ENCODE measurements at regions of chr2 and their contacts with region 1.

Region 1: DNA sequence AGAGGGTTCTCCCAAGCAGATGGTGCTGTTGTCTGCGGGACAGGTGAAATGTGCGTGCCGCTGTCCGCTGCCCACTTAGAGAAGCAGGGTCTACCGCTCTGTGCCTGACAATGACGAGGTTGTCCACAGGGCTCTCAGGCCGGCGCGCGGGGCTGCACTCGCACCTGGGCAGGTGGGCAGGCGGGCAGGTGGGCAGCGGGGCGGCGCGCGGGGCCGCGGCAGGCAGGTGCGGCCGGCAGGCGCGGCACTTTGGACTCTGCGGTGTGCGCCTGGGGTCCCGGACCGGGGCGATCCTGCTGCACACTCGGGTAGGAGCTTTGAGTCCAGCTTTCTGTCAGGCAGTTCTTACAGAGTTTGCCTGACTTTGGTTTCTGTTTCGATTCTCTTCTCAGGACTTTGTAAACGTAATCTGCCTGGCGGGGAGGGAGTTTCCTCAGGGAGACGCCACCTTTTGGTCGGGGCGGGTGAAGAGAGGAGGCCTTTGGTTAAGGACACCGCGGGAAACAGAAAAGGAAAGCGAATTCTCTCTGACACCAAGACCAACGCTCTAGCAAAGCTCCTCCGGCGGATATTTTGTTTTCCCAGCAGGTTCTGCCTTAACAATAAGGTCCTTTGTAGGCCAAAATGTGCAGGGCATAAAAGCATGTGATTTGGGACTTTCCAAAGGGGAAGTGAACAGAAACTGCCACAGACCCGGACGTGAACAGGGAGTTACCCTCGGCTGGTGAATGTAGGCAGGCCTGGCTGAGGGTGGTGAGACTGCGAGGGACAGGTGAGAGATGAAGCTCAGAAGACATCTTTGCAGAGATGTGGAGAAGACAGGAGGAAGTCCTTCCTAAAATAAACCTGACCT is at the start of gene IFIH1:
- DNase-seq: peak; percentile 93 to 98 (median 97)
- H3K4me3 ChIP-seq: peak within 1 kb of the TSS; percentile 87 to 100 (median 96)
- H3K27ac ChIP-seq: peak within 1 kb of the TSS; percentile 98 to 99
- H3K4me1 ChIP-seq: peaks cover 13 to 51% (median 32%) of the 10 kb centered on the region in 4 experiments
- H3K27me3 ChIP-seq: no peaks in the 10 kb centered on the region

Region 2: GRCh38 chr2:162058973-162059668 is 259.4 kb before region 1 on chr2:
- CTCF ChIA-PET with region 1: no interaction called
- POLR2A ChIA-PET with region 1: no interaction called
- DNase-seq: no peak
- H3K4me3 ChIP-seq: no peak overlapping the region
- H3K27ac ChIP-seq: no peak overlapping the region
- H3K4me1 ChIP-seq: no peaks in the 10 kb centered on the region
- H3K27me3 ChIP-seq: no peaks in the 10 kb centered on the region

Region 3: DNA sequence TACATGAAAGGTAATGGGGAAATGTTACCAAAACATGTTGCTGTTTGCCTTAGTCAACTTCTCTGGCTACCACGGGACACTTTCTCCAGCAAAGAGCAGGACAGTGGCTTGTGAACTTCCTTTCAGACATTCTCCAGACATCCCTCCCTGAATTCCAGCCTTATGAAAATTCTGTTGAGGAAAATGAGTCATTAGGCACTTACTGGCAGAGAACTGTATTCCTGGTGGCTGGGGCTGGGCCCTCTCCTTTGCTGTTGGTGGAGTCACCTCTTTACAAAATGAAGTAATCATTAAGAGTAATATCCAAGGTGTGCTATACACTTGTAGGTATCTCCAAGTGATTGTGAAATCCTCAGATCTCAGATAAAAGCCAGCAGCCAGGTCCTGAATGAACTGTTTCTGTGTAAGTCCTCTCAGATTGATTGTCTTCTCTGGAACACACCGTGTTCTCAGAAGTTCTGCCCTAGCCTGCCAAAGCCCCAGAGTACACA is 74.0 kb before region 1 on chr2:
- CTCF ChIA-PET with region 1: no interaction called
- POLR2A ChIA-PET with region 1: no interaction called
- DNase-seq: no peak
- H3K4me3 ChIP-seq: no peak overlapping the region
- H3K27ac ChIP-seq: no peak overlapping the region
- H3K4me1 ChIP-seq: no peaks in the 10 kb centered on the region
- H3K27me3 ChIP-seq: no peaks in the 10 kb centered on the region

Region 4: DNA sequence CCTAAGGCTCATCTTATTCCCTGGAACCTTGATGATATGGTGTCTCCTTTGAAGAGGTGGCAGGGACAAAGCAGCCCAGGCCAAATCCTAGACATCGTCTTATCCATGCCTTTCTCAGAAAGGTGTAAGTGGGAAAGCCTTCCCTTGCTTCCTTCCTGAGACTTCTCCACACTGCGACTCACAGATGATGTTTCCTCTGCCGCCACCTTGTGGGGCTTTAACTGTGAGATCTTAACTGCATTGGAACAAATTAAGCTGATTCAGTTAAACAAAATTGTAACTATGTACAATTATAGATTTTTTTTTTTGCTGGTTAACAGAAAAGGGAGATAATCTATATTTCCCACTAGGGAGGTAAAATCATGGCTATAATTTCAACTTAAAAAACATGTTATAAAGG is 15.4 kb after region 1 on chr2:
- CTCF ChIA-PET with region 1: interaction called, 34 read pairs
- POLR2A ChIA-PET with region 1: interaction called, 9 read pairs
- DNase-seq: peak; percentile 31 to 42 (median 39)
- H3K4me3 ChIP-seq: no peak overlapping the region
- H3K27ac ChIP-seq: no peak overlapping the region
- H3K4me1 ChIP-seq: peaks cover 0 to 2% (median 0%) of the 10 kb centered on the region in 4 experiments
- H3K27me3 ChIP-seq: no peaks in the 10 kb centered on the region

Region 5: DNA sequence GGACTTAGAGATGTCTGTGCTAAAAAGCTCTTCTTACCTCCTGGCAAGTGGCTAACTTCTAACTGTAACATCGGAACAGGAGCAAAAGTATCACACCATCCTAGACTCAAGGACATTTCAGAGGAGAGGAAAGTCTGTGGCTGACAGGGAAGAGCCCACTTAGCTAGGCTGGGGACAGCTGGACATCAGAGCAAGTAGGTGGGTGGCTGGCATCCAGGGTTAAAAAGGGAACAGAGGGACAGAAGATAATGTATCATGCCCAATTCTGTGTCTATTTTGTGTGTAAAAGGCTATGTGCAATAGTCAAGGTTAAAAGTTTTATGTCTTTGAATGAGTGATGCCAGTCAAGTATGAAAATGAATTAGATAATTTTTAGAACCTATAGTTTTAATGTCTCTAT is 241.7 kb after region 1 on chr2:
- CTCF ChIA-PET with region 1: no interaction called
- POLR2A ChIA-PET with region 1: no interaction called
- DNase-seq: no peak
- H3K4me3 ChIP-seq: no peak overlapping the region
- H3K27ac ChIP-seq: no peak overlapping the region
- H3K4me1 ChIP-seq: no peaks in the 10 kb centered on the region
- H3K27me3 ChIP-seq: no peaks in the 10 kb centered on the region